PC-3 (cell line): ENCODE measurements at regions of chr16 and their contacts with region 1.

Region 1: DNA sequence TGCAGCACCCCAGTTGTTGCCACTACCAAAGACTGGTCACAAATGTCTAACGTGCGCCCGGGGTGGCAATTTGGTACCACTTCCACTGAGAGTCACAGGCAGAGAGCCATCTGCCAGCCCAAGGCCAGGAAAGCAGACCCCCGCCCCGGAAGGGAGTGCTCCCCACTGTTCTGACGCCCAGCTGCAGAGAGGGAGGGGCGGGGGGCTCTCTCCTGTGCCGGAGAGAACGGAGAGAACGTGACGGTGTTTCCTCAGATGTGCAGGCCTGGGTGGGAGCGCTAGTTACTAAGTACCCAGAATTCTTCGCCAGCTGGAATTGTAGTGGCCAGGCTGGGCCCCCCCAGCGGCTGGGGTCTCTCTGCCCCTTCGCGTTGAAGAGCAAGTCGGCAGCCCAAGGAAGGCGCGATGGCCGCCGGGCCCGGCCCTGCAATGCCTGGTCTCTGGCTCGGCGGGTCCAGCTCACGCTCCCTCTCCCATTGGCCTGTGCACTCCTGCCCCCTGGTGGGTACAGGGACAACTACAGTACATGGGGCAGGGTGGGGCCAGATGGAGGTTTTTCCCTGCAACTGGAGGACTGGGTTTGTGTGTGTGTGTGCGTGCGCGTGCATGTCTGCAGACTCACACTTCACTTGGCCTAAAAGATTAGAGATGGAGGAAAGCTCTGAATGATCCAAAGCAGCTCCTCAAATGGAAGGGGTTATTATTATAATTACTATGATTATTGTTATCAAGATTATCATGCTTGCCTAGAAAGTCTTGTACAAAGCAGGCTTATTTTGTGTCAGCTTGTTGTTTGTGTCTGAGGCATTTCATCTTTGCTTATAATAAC is 107.1 kb downstream of the AMFR start:
- DNase-seq: peak; percentile 73
- ATAC-seq: peak; percentile 98
- H3K4me3 ChIP-seq: no peak overlapping the region
- H3K27ac ChIP-seq: no peak overlapping the region
- H3K4me1 ChIP-seq: no peaks in the 10 kb centered on the region
- H3K27me3 ChIP-seq: 0 out of 2 replicates have a peak, but pooled peaks cover 3% of the 10 kb centered on the region
- CTCF ChIP-seq: peak; percentile 72

Region 2: DNA sequence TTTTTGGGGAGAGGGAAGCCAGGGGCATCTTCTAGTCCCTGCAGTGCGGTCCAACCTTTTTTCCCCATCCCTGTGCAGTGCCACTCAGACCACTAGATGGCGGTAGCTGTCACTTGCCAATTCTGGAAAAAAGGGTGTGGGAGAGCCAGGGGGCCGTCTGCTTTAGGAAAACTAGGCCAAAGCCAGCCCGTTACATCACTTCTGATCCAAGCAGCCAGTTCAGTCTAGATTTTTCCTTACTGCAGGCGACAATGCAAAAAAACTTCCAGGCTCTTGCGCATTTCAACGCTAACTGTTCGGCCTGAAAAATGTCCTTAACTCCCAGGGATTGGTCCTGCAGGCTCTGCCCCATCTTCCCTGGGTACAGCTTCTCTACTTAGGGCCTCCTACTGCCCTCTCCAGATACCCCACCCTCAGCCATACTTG is 373.8 kb before region 1 on chr16:
- CTCF ChIA-PET with region 1: no interaction called
- POLR2A ChIA-PET with region 1: no interaction called
- intact Hi-C with region 1: loop called (anchors 1 kb)
- DNase-seq: peak; percentile 59
- ATAC-seq: peak; percentile 55; the same call in 1 of the 2 replicates
- H3K4me3 ChIP-seq: no peak overlapping the region
- H3K27ac ChIP-seq: no peak overlapping the region
- H3K4me1 ChIP-seq: no peaks in the 10 kb centered on the region
- H3K27me3 ChIP-seq: peaks cover 14% of the 10 kb centered on the region; the same call in 1 of the 2 replicates
- CTCF ChIP-seq: peak; percentile 81

Region 3: DNA sequence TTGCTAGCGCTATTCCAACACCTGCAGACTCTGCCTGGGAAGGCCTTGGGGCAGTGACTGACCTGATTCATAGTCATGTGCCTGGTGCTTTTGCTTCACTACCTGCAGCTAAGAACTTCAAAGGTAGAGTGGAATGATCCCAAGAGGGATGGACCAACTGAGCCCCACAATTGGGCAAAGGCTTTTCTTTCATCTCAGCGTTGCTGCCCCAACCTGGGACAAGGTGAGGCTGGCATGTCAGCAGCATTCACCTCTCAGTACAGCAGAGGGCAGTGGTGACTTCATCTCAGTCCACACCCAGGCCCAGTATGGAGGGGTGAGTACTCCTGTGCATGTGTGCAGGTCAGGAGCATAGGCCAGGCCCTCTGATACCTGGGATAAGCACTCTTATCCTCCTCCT is 276.5 kb before region 1 on chr16:
- CTCF ChIA-PET with region 1: no interaction called
- POLR2A ChIA-PET with region 1: no interaction called
- intact Hi-C with region 1: loop called (anchors 5 kb)
- DNase-seq: peak; percentile 31
- ATAC-seq: no peak; the same call in 1 of the 2 replicates
- H3K4me3 ChIP-seq: no peak overlapping the region
- H3K27ac ChIP-seq: no peak overlapping the region
- H3K4me1 ChIP-seq: no peaks in the 10 kb centered on the region
- H3K27me3 ChIP-seq: no peaks in the 10 kb centered on the region
- CTCF ChIP-seq: peak; percentile 43

Region 4: DNA sequence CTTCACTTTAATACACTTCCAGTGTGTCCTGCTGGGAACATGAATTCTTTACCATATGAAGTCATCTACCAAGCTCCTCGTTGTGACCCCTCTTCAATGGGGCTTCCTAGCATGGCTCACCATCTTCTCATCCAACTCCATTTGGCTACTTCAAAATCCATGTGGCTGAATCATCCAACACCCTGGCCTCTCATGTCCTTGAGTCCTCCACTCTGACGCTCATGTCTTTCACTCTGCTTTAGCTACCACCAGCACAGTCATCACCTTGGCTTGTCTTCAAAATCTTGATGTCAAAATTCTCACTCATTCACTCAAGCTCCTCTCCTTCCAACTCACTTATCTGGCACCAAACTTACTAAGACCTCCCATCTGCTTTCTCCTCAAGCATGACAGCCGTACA is 71.3 kb after region 1 on chr16:
- CTCF ChIA-PET with region 1: no interaction called
- POLR2A ChIA-PET with region 1: no interaction called
- intact Hi-C with region 1: no loop called
- DNase-seq: peak; percentile 46
- ATAC-seq: no peak
- H3K4me3 ChIP-seq: no peak overlapping the region
- H3K27ac ChIP-seq: no peak overlapping the region
- H3K4me1 ChIP-seq: no peaks in the 10 kb centered on the region
- H3K27me3 ChIP-seq: no peaks in the 10 kb centered on the region
- CTCF ChIP-seq: no peak